ENCODE measurements at regions of chr11 and their contacts with region 1.

Region 1: GRCh38 chr11:118928108-118928870 is 2.6 kb upstream of the BCL9L start:
- DNase-seq: peak; percentile 88 to 99 (median 92)
- ATAC-seq: peak; percentile 60
- H3K4me3 ChIP-seq: peak overlapping the region; percentile 93
- H3K4me3 Mint-ChIP-seq: peak overlapping the region; percentile 89
- H3K27ac ChIP-seq: peak overlapping the region; percentile 98 to 100
- H3K27ac Mint-ChIP-seq: peak overlapping the region; percentile 97
- H3K4me1 ChIP-seq: peaks cover 57% of the 10 kb centered on the region
- H3K4me1 Mint-ChIP-seq: peaks cover 55% of the 10 kb centered on the region
- H3K27me3 ChIP-seq: no peaks in the 10 kb centered on the region
- H3K27me3 Mint-ChIP-seq: peaks cover 5% of the 10 kb centered on the region
- CTCF ChIP-seq: peak; percentile 95

Region 2: GRCh38 chr11:118878163-118878563 is 50.1 kb before region 1 on chr11:
- CTCF ChIA-PET with region 1: interaction called, 6 read pairs
- POLR2A ChIA-PET with region 1: interaction called, 14 read pairs
- intact Hi-C with region 1: loop called in 1 of 2 experiments (anchors 2 kb)
- DNase-seq: peak in 7 of 14 experiments; percentile 35 to 79 (median 50)
- ATAC-seq: peak; percentile 28
- H3K4me3 ChIP-seq: no peak overlapping the region
- H3K4me3 Mint-ChIP-seq: peak overlapping the region; percentile 84
- H3K27ac ChIP-seq: peak overlapping the region; percentile 83 to 90
- H3K27ac Mint-ChIP-seq: peak overlapping the region; percentile 95
- H3K4me1 ChIP-seq: peaks cover 95% of the 10 kb centered on the region
- H3K4me1 Mint-ChIP-seq: peaks cover 92% of the 10 kb centered on the region
- H3K27me3 ChIP-seq: no peaks in the 10 kb centered on the region
- H3K27me3 Mint-ChIP-seq: no peaks in the 10 kb centered on the region
- CTCF ChIP-seq: no peak

Region 3: GRCh38 chr11:118907051-118908042 is 20.9 kb before region 1 on chr11:
- CTCF ChIA-PET with region 1: interaction called, 42 read pairs
- POLR2A ChIA-PET with region 1: no interaction called
- intact Hi-C with region 1: loop called (anchors 1 kb)
- DNase-seq: peak; percentile 78 to 91 (median 86)
- ATAC-seq: peak; percentile 41
- H3K4me3 ChIP-seq: no peak overlapping the region
- H3K4me3 Mint-ChIP-seq: peak overlapping the region; percentile 77
- H3K27ac ChIP-seq: peak overlapping the region; percentile 22 to 49
- H3K27ac Mint-ChIP-seq: peak overlapping the region; percentile 100
- H3K4me1 ChIP-seq: peaks cover 60% of the 10 kb centered on the region
- H3K4me1 Mint-ChIP-seq: peaks cover 48% of the 10 kb centered on the region
- H3K27me3 ChIP-seq: no peaks in the 10 kb centered on the region
- H3K27me3 Mint-ChIP-seq: no peaks in the 10 kb centered on the region
- CTCF ChIP-seq: peak; percentile 88

Region 4: GRCh38 chr11:118939953-118940598 is 11.8 kb after region 1 on chr11:
- CTCF ChIA-PET with region 1: interaction called, 8 read pairs
- POLR2A ChIA-PET with region 1: interaction called, 37 read pairs
- intact Hi-C with region 1: no loop called
- DNase-seq: peak in 11 of 14 experiments; percentile 21 to 78 (median 61)
- ATAC-seq: peak; percentile 95
- H3K4me3 ChIP-seq: no peak overlapping the region
- H3K4me3 Mint-ChIP-seq: peak overlapping the region; percentile 60
- H3K27ac ChIP-seq: no peak overlapping the region
- H3K27ac Mint-ChIP-seq: peak overlapping the region; percentile 44
- H3K4me1 ChIP-seq: peaks cover 33% of the 10 kb centered on the region
- H3K4me1 Mint-ChIP-seq: peaks cover 55% of the 10 kb centered on the region
- H3K27me3 ChIP-seq: no peaks in the 10 kb centered on the region
- H3K27me3 Mint-ChIP-seq: no peaks in the 10 kb centered on the region
- CTCF ChIP-seq: no peak

Region 5: GRCh38 chr11:118997627-118998387 is 69.5 kb after region 1 on chr11 and contains the start of gene CENATAC:
- CTCF ChIA-PET with region 1: no interaction called
- POLR2A ChIA-PET with region 1: interaction called, 5 read pairs
- intact Hi-C with region 1: loop called in 1 of 2 experiments (anchors 5 kb)
- DNase-seq: peak; percentile 90 to 98 (median 96)
- ATAC-seq: peak; percentile 91
- H3K4me3 ChIP-seq: peak within 1 kb of the TSS; percentile 74
- H3K4me3 Mint-ChIP-seq: peak within 1 kb of the TSS; percentile 98
- H3K27ac ChIP-seq: peak within 1 kb of the TSS; percentile 74 to 78
- H3K27ac Mint-ChIP-seq: peak within 1 kb of the TSS; percentile 90
- H3K4me1 ChIP-seq: peaks cover 31% of the 10 kb centered on the region
- H3K4me1 Mint-ChIP-seq: peaks cover 46% of the 10 kb centered on the region
- H3K27me3 ChIP-seq: no peaks in the 10 kb centered on the region
- H3K27me3 Mint-ChIP-seq: no peaks in the 10 kb centered on the region
- CTCF ChIP-seq: no peak
- total RNA-seq, gene CENATAC: 121 to 122 TPM

Region 6: DNA sequence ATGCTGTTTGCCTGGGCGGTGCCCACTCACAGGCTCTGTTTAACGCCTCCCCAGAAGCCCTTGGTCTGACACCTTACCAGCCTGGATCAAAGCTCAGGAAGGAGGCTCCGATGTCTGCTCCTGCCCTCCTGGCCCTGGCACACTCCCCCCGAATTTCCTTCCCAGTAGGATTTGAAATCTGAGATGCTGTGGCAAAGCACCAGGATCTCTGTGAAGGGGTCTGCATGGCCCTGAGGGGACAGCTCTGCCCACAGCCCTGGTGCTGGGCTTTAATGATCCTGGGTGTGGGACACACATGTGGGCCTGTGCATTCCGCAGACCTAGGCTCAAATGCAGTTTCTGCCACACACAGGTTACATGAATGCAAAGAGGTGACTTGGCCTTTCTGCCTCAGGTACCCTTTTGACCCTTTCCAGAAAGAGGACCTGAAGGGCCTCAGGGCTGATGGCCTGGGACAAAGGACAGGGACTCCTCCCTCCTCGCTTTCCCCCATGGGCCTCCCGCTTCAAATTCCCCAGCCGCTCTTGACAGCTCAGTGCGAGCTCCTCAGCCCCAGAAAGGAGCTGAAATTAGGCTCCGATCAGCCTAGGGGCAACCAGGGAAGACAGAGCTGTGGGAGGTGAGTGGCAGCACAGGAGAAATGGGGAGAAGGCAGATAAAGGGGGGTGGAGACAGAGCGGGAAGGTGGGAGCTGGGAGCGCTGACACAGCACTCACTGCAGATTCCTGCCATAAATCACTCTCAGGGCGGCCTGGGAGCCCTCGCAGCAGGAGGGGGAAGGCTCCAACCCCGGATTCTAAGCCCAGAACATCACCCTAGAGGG is 1168.3 kb after region 1 on chr11:
- CTCF ChIA-PET with region 1: no interaction called
- POLR2A ChIA-PET with region 1: no interaction called
- intact Hi-C with region 1: no loop called
- DNase-seq: no peak
- ATAC-seq: no peak
- H3K4me3 ChIP-seq: no peak overlapping the region
- H3K4me3 Mint-ChIP-seq: no peak overlapping the region
- H3K27ac ChIP-seq: no peak overlapping the region
- H3K27ac Mint-ChIP-seq: no peak overlapping the region
- H3K4me1 ChIP-seq: no peaks in the 10 kb centered on the region
- H3K4me1 Mint-ChIP-seq: no peaks in the 10 kb centered on the region
- H3K27me3 ChIP-seq: peaks cover 0 to 9% of the 10 kb centered on the region in 2 experiments
- H3K27me3 Mint-ChIP-seq: no peaks in the 10 kb centered on the region
- CTCF ChIP-seq: no peak

Measured in CD4-positive, alpha-beta T cell (primary cell).